Activated CD8-positive, alpha-beta T cell treated with anti-CD3 and anti-CD28 coated beads for 36 hours (primary cell): ENCODE measurements at regions of chr16 and their contacts with region 1.

Region 1: GRCh38 chr16:66961065-66961744 is at the start of gene CES3:
- DNase-seq: peak; percentile 84
- ATAC-seq: peak; percentile 94
- H3K4me3 Mint-ChIP-seq: peak within 1 kb of the TSS; percentile 24
- H3K27ac Mint-ChIP-seq: peak within 1 kb of the TSS; percentile 83
- H3K4me1 Mint-ChIP-seq: peaks cover 16% of the 10 kb centered on the region
- H3K27me3 Mint-ChIP-seq: peaks cover 4% of the 10 kb centered on the region
- CTCF ChIP-seq: peak; percentile 78
- total RNA-seq, gene CES3: 2.1 to 2.9 TPM

Region 2: DNA sequence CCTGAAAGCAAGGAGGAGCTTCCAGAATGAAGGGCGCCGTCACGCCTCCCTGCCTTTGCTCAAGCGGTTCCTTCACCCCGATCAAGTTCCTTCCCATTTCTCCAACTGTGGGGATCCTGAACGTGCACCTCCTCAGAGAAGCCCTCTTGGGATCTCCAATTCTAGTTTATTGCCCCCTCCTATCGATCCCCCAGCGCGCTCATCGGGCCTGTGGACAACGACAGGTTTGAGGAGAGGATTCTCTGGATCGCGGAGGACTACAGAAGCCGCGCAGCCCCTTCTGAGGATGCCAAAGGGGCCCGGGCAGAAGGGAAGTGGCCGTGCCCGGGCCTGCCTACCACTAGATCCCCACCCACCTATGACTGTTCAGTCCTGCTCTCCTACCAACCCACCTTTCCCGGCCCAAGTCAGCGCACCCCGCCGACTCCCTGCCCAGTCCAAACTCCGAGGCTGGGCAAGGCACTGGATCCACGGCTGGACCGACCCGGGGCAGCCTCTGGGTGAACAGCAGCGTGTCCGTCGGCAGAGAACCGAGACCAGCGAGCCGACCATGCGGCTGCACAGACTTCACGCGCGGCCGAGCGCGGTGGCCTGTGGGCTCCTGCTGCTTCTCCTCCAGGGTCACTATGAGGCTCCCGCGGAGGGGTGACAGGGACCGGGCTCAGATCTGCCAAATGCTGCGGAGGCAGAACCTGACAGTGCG is 12.9 kb before region 1 on chr16:
- CTCF ChIA-PET with region 1: interaction called, 10 read pairs
- POLR2A ChIA-PET with region 1: interaction called, 3 read pairs
- intact Hi-C with region 1: no loop called
- DNase-seq: no peak
- ATAC-seq: peak; percentile 26
- H3K4me3 Mint-ChIP-seq: peak overlapping the region; percentile 79
- H3K27ac Mint-ChIP-seq: no peak overlapping the region
- H3K4me1 Mint-ChIP-seq: peaks cover 22% of the 10 kb centered on the region
- H3K27me3 Mint-ChIP-seq: peaks cover 39% of the 10 kb centered on the region
- CTCF ChIP-seq: no peak